ENCODE measurements at regions of chr1 and their contacts with region 1.

Region 1: DNA sequence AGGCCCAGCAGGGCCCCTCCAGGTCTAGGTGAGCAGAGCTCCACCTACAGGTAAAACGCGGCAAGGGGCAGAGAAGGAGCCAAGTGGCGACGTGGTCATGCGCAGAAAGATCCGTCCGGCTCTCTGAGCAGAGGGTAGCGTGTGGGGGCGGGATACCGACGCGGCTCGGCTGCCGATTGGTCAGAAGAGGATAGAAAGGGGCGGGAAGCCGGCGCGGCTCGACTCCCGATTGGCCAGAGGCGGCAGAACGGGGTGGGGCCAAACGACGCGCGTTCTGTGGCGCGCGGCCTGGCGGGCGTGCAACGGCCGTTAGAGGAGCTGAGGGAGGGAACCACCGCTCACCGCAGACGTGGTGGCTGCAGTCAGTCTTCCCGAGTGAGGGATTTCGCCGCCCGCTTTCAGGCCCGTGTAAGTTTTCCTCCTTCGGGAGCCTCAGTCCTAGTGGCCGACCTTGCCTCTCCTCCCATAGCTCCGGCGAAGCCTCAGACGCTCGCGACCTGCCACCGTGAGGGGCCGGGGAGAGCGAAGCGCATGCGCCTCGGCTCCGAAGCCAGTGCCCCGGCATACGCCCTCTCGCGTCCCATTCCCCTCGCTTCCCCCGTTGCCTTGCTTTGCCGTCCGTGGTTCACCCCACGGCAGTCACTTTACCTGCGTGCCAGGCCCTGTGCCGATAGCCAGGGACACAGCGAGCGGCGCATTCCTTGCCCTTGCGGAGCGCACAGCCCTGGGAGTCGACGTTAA is at the start of gene CEP85:
- DNase-seq: peak; percentile 100
- CTCF ChIP-seq: peak; percentile 97

Region 2: GRCh38 chr1:26111530-26112406 is 122.3 kb before region 1 on chr1 and contains the start of gene PDIK1L:
- CTCF ChIA-PET with region 1: interaction called, 12 read pairs
- POLR2A ChIA-PET with region 1: no interaction called
- DNase-seq: peak; percentile 92
- CTCF ChIP-seq: no peak

Region 3: DNA sequence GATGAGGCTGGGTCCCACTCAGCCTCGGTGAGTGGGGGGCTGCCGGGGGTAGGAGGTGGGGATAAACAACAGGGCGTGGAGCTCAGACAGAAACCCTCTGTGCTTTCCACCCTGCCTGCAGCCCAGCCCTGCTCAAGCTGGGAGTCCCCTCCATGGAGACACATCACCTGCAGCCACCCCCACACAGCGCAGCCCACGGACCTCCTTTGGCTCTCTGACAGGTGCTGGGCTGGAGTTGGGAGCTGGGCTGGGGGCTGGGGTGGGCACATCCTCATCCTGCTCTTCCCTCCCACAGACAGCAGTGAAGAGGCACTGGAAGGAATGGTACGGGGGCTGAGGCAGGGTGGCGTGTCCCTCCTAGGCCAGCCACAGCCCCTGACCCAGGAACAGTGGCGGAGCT is 45.6 kb before region 1 on chr1:
- CTCF ChIA-PET with region 1: interaction called, 15 read pairs
- POLR2A ChIA-PET with region 1: no interaction called
- DNase-seq: no peak
- CTCF ChIP-seq: no peak

Region 4: GRCh38 chr1:26218906-26219494 is 15.1 kb before region 1 on chr1:
- CTCF ChIA-PET with region 1: interaction called, 32 read pairs
- POLR2A ChIA-PET with region 1: no interaction called
- DNase-seq: no peak
- CTCF ChIP-seq: no peak

Region 5: DNA sequence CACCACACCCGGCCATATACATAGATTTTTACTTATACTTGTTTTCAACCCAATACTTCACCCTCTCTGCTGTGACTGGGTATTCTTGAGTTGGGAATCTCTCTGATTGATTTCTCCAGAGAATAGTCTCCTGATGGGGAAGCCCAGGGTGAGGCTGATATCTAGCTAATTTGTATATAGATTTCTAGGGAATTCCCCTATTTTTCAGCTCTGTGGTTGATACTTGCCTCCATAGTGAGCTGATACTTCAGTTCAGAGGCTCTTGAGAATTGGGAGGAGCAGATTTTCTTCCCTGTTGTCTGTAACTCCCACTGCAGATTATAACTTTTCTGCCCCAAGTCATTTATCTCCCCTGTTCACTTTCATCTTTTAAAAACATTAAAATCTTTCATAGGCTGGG is 31.3 kb after region 1 on chr1:
- CTCF ChIA-PET with region 1: interaction called, 14 read pairs
- POLR2A ChIA-PET with region 1: interaction called, 4 read pairs
- DNase-seq: no peak
- CTCF ChIP-seq: no peak

Region 6: DNA sequence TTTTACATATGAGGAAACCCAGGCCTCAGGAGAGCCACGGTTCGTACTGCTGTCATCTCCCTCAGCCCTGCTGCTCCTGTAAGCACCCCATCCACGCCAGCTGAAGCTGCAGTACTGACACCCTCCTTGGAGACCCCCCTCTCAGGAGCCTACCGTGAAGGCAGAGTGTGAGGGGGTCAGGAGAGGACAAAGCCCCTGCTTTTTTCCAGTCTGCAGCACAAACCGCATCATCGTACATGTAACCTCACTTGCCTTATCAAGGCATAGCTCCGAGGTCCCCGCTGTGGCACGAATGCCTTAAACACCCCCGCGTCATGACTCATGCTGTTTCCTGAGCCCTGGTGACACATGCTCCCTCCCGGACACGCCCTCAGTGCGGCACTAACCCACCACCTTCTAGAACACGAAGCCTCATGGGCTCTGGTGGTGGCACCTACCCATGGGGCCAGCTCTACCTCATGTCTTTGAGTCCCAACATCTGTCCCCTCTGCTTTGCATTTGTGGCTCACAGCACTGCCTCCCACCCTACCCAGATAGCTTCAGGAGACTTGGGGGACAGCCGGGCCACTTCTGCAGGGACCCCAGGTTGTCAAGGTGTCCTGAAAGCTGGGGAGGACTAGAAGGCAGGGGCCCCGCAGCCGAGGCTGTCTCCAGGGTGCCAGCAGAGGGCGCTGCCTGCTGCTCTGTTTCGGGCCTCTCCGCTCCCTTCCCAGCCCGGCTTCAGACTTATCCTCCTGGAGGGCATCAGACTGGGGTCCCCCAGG is 50.7 kb after region 1 on chr1:
- CTCF ChIA-PET with region 1: interaction called, 21 read pairs
- POLR2A ChIA-PET with region 1: no interaction called
- DNase-seq: peak; percentile 80
- CTCF ChIP-seq: peak; percentile 89

Region 7: GRCh38 chr1:26363549-26364448 is 129.7 kb after region 1 on chr1:
- CTCF ChIA-PET with region 1: interaction called, 10 read pairs
- POLR2A ChIA-PET with region 1: no interaction called
- DNase-seq: peak; percentile 87
- CTCF ChIP-seq: peak; percentile 97

Measured in GM10248 (cell line).